A549 (cell line): ENCODE measurements at regions of chr3 and their contacts with region 1.

Region 1: DNA sequence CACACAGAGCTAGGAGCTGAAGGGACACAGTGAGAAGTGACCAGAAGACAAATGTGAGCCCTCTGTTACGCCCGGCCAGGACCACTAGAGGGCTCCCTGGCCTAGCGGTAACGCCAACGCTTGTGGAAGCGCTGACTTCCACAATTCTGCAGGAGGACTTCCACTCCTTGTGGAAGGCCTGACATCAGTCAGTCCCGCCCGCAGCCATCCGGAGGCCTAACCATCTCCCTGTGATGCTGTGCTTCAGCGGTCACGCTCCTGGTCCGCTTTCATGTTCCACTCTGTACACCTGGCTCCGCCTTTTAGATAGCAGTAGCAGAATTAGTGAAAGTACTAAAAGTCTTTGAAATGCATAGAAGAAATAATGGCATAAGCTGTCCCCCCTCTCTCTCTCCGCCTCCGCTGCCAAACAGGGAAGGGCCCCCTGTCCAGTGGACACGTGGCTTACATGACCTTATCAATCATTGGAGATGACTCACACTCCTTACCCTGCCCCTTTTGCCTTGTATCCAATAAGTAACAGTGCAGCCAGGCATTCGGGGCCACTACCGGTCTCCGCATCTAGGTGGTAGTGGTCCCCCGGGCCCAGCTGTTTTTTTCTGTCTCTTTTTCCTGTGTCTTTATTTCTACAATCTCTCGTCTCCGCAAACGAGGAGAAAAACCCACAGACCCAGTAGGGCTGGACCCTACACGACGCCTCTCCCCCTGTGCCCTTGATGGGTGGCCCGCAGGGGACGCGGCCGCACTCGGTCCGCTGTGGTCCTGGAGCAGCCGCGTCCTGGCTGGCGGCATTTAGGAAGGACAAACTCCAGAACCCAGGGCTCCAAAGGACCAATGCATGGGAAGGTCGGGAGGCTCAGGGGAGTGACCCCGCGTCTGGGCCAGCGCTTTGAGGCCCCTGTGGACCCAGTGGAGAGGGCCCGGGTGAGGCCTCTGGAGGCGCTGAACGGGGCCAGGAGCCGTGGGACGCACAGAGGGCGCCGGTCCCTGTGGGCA is 27.0 kb upstream of the RPL32 start:
- DNase-seq: peak; percentile 85 to 88
- ATAC-seq: peak; percentile 95 to 97
- H3K4me3 ChIP-seq: no peak overlapping the region
- H3K27ac ChIP-seq: no peak overlapping the region
- H3K4me1 ChIP-seq: peaks cover 4% of the 10 kb centered on the region; the same call in 2 of the 3 replicates
- CTCF ChIP-seq: peak; percentile 87
- EP300 ChIP-seq: no peak
- POLR2A ChIP-seq: no peak
- RAD21 ChIP-seq: peak; percentile 80 to 87

Region 2: DNA sequence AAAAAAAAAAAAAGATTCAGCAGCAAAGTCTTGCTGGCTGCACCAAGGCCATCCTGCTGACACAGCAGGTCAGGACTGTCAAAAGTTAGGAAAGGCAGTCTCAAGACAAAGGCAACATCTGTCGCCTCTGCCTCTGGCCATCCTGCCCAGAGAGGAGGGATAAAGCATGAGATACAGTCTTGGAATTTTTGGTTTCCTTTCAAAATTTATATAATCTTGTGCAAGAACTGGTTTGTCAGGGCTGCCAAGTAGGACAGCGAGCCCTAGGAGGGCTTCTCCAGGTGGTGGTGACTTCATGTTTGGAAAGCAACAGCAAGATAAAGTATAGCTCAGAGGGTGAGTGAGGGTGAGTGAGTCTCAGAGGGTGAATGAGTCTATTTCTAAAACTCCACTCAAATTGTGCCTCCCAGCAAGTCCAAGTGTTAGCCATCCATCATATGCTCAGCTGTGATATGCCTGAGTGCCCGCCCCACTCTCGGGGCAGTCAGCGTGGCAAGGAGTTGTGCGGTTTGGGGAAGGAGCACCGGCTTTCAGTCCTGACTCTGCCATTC is 15.1 kb before region 1 on chr3:
- CTCF ChIA-PET with region 1: interaction called, 19 read pairs
- POLR2A ChIA-PET with region 1: no interaction called
- DNase-seq: no peak
- ATAC-seq: no peak
- H3K4me3 ChIP-seq: no peak overlapping the region
- H3K27ac ChIP-seq: no peak overlapping the region
- H3K4me1 ChIP-seq: no peaks in the 10 kb centered on the region
- CTCF ChIP-seq: no peak
- EP300 ChIP-seq: no peak
- POLR2A ChIP-seq: no peak
- RAD21 ChIP-seq: no peak

Region 3: GRCh38 chr3:12884186-12884680 is 15.9 kb after region 1 on chr3:
- CTCF ChIA-PET with region 1: interaction called, 90 read pairs
- POLR2A ChIA-PET with region 1: no interaction called
- DNase-seq: no peak
- ATAC-seq: no peak; a peak in 1 of 6 replicates
- H3K4me3 ChIP-seq: no peak overlapping the region
- H3K27ac ChIP-seq: no peak overlapping the region
- H3K4me1 ChIP-seq: no peaks in the 10 kb centered on the region
- CTCF ChIP-seq: no peak
- EP300 ChIP-seq: no peak
- POLR2A ChIP-seq: no peak
- RAD21 ChIP-seq: no peak

Region 4: DNA sequence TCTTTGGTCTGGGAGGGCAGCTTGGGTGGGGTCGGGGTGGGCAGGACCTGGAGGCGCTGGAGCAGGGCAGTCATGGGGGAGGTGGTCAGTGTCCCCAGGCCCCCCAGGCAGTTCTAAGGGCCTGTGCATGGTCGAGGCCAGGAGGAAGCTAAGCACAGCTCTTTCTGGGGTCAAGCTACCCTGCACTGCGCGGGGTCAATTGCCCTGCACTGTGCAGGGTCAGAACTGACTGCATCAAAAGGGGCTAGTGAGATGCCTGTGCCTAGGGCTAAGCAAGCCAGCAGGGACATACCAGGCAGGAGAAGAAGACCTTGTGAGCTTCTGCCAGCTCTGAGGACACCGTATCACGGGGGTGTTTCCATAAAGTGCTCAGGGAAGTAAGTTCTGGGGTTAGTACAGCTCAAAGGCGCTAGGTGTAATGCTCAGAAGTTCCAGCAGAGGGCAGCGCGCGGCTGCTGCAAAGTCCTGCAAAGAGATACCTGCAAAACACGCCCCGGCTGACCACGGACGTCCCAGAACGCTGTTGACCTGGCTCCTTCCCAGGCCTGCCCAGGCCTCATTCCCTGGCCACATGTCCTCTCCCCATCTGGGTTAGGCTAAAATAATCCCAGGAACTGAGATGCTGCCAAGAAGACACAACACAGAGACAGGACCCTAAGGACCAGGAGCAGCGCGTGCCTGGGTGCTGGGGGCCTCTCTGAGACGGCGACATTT is 223.7 kb after region 1 on chr3:
- CTCF ChIA-PET with region 1: no interaction called
- POLR2A ChIA-PET with region 1: no interaction called
- DNase-seq: peak; percentile 80 to 83
- ATAC-seq: peak; percentile 79 to 94
- H3K4me3 ChIP-seq: no peak overlapping the region
- H3K27ac ChIP-seq: no peak overlapping the region
- H3K4me1 ChIP-seq: no peaks in the 10 kb centered on the region
- CTCF ChIP-seq: peak; percentile 85
- EP300 ChIP-seq: no peak
- POLR2A ChIP-seq: no peak
- RAD21 ChIP-seq: peak; percentile 89 to 92